ENCODE measurements at regions of chr4 and their contacts with region 1.

Region 1: DNA sequence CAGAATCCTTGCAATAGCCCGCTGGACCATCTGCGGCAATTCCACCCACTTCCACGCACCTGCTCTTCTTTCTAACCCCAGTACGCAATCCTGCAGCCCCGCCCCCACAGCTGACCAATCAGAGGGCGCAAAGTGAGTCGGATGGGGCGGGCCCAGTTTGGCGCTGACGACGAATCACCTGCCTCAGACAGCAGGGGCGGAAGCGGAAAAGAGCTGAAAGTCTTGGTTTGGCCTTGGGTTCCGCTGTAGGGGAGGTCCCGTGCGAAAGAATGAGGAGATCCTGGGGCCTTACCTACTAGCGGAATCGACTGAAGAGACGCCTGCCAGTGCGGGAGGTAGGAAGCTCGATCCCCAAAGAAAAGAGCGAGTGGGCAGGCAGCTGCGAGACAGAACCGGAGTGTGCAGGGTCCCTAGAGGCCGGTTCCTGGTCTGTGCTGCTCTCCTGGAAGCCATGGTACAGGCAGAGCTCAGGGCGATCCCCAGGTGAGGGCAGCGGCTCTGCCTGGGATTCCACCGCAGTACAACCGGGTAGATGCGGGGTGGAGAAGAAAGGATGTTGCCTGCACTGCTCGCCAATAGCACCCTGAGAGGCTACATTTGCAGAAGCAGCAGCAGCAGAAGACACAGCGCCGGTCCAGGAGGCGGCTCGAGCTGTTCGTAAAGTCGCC is at the start of gene TMEM184C:
- DNase-seq: peak; percentile 96 to 98
- ATAC-seq: peak; percentile 99
- H3K4me3 ChIP-seq: peak within 1 kb of the TSS; percentile 72 to 87 (median 82)
- H3K27ac ChIP-seq: peak within 1 kb of the TSS; percentile 82 to 92 (median 84)
- H3K4me1 ChIP-seq: peaks cover 31% of the 10 kb centered on the region in 2 donors
- H3K27me3 ChIP-seq: no peaks in the 10 kb centered on the region
- CTCF ChIP-seq: peak in 4 of 5 experiments; percentile 9 to 43 (median 26)
- POLR2A ChIP-seq: peak; percentile 67 to 71
- total RNA-seq, gene TMEM184C: 15.6 to 30.9 (median 20.7) TPM

Region 2: DNA sequence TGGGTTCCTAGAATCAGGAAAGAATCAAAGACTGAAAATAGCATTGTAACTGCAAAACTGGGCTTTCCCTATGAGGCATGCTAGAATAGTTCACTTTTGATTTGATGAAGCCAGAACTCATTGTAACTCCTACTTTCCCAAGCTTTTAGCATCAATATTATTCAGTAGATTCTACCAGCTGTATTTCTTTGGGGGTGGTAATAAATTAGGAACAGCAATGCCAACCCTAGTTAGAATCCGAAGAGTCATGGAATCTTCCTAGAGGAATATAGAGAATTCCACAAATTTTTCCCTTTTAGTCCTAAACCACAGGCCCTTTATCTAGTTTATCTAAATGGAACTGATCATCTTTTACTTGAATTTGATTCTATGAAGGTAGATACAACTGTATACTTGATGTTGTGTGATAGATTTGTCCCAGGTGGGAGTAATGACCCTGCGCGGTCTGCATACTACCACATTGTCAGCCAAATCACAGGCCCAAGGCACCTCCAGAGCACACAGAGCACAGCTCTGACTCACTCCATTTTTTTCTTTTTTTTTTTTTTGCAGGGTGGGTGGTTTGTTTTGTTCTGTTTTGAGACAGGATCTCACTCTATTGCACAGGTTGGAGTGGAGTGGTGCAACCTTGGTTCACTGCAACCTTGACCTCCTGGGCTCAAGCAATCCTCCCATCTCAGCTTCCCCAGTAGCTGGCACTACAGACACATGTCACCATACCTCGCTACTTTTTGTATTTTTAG is 69.8 kb before region 1 on chr4:
- in situ Hi-C with region 1: no loop called
- intact Hi-C with region 1: no loop called
- DNase-seq: no peak
- ATAC-seq: no peak
- H3K4me3 ChIP-seq: no peak overlapping the region
- H3K27ac ChIP-seq: no peak overlapping the region
- H3K4me1 ChIP-seq: no peaks in the 10 kb centered on the region
- H3K27me3 ChIP-seq: no peaks in the 10 kb centered on the region
- CTCF ChIP-seq: no peak
- POLR2A ChIP-seq: no peak

Region 3: DNA sequence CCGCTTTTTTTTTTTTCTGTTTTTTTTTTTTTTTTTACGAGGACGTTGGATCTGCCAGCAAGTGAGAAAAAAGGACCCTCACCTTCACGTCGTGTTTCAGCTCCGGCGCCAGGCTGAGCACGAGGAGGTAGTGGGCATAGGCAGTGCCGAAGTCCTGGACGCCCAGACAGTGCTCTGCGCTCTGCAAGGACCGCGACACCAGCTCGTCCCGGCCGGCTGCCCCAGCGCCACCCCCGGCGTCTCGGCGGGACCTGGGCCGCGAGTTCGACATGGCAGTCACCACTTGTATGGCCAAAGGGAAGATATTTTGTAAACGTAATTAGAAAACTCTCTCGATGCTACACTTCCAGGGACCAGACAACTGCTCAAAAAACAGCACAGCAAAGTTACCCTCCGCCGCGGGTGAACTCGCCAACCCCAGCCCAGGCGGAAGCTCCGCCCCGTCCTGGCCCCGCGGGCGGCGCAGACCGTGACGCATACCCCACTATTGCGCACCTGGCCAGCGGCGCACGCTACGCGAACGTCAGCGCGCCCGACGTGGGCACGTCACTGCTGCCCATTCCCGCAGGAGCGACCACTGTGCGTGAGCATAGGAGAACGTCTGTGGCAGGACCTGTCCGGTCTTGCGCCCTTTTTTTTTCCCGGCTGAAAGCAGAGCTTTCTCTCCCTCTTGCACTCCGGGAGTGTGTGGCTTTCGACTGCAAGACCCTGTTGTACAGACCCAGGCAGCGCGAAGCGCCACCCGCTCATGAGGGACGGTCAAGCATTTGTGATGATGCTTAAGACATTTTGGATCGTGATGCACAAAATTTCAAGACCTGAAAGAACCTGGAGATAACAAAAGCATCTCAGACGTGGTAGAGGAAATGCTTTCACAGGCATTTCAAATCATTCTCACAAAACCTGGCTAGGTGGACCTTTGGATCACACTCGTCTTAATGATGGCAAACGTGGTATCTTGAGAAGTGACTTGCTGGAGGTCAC is 66.7 kb after region 1 on chr4 and contains the start of gene PRMT9:
- in situ Hi-C with region 1: loop called in 1 of 4 experiments (anchors 10 kb)
- intact Hi-C with region 1: loop called (anchors 1 kb)
- DNase-seq: peak; percentile 75 to 88
- ATAC-seq: peak; percentile 94 to 95
- H3K4me3 ChIP-seq: peak within 1 kb of the TSS; percentile 67 to 93 (median 90)
- H3K27ac ChIP-seq: peak within 1 kb of the TSS; percentile 90 to 97 (median 93)
- H3K4me1 ChIP-seq: peaks cover 19 to 20% of the 10 kb centered on the region in 2 donors
- H3K27me3 ChIP-seq: no peaks in the 10 kb centered on the region
- CTCF ChIP-seq: no peak
- POLR2A ChIP-seq: peak; percentile 84 to 85
- total RNA-seq, gene PRMT9: 5.2 to 9.1 (median 5.5) TPM

Region 4: DNA sequence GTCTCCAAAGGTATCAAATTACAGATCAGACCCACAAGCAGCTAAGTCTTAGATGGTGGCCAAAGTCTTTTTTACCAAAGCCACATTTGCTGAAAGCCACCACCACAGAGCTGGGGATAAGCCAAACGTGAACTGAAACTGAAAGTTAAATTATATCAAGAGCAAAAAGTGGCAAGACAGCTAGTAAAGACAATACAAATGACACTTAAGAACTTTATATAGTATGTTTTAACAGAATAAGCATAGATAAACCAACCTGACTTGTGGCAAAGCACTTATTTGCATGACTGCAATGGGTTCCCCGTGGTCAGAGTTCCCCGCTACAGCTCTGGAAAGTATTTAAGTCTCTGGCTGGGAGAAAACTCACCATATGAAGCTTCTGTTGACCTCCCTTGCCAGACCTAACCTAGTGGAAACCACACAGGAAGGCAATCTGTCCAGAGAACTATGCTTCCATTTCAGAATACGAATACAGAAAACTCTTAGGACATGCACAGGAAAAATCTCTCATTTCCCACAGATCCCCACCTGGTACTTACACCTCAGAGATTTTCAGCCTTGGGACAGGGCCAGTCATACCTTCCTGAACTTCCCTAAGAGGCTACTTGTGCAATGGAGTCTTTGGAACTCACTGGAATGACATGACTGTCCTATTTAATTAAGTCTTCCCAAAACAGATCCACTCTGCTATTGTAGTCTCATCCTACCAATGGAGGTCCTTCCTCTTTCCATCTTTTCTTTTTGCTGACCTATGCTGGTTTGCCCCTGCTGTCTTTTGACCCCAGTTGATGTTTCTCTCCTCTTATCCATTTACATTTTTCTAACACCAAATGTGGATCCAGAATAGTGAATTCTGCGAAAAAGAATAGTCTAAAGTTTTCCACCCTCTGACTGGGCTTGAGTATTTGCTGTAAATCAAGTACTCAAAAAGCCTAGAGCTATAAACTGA is 599.8 kb after region 1 on chr4:
- in situ Hi-C with region 1: no loop called
- intact Hi-C with region 1: loop called (anchors 10 kb)
- DNase-seq: no peak
- ATAC-seq: no peak
- H3K4me3 ChIP-seq: peak overlapping the region; percentile 27 to 58 (median 34)
- H3K27ac ChIP-seq: peak overlapping the region; percentile 28 to 63 (median 42)
- H3K4me1 ChIP-seq: peaks cover 27 to 37% of the 10 kb centered on the region in 2 donors
- H3K27me3 ChIP-seq: no peaks in the 10 kb centered on the region
- CTCF ChIP-seq: no peak
- POLR2A ChIP-seq: no peak

Measured in gastrocnemius medialis (tissue), 4 donors.